PC-9 (cell line): ENCODE measurements at regions of chr4 and their contacts with region 1.

Region 1: GRCh38 chr4:112031712-112032328 is 113.4 kb upstream of the FAM241A start:
- DNase-seq: peak; percentile 20 to 46
- H3K4me3 ChIP-seq: no peak overlapping the region
- H3K27ac ChIP-seq: no peak overlapping the region
- H3K4me1 ChIP-seq: no peaks in the 10 kb centered on the region
- H3K27me3 ChIP-seq: no peaks in the 10 kb centered on the region
- CTCF ChIP-seq: peak; percentile 88

Region 2: DNA sequence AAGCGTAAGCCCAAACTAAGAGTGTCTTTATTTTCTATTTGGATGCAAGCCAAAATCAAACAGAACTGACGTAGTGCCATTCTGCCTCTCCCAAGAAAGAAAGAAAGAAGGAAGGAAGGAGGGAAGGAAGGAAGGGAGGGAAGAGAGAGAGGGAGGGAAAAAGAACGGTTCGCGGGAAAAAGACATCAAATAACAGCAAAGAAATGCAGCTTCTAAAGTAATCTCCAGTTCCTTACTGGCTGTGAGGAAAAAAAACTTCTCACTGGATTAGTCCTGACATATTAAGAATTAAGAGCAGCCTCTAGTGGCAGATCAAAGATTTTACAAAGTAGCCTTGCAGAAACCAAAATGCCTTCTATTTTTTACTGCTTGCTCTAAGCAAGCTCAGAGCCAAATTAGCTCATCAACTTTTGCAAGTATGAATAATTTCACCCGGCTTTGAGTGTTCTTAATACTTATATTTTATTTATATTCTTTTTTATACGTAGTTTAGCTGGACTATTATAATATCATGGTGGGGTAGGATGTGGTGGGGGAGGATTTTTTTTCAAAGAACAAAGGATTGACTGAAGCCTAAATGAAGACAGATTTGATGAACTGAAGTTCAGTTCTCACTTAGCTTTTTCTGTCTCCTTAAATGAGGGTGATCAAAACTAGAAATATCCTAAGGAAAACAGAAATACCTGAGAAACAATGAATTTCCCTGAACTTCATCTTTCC is 1445.5 kb before region 1 on chr4:
- CTCF ChIA-PET with region 1: no interaction called
- POLR2A ChIA-PET with region 1: no interaction called
- intact Hi-C with region 1: loop called (anchors 2 kb)
- DNase-seq: peak in 1 of 2 experiments; percentile 42
- H3K4me3 ChIP-seq: no peak overlapping the region
- H3K27ac ChIP-seq: no peak overlapping the region
- H3K4me1 ChIP-seq: no peaks in the 10 kb centered on the region
- H3K27me3 ChIP-seq: no peaks in the 10 kb centered on the region
- CTCF ChIP-seq: peak; percentile 55

Region 3: GRCh38 chr4:111546881-111547280 is 484.9 kb before region 1 on chr4:
- CTCF ChIA-PET with region 1: no interaction called
- POLR2A ChIA-PET with region 1: interaction called, 11 read pairs
- intact Hi-C with region 1: no loop called
- DNase-seq: no peak
- H3K4me3 ChIP-seq: no peak overlapping the region
- H3K27ac ChIP-seq: no peak overlapping the region
- H3K4me1 ChIP-seq: no peaks in the 10 kb centered on the region
- H3K27me3 ChIP-seq: no peaks in the 10 kb centered on the region
- CTCF ChIP-seq: no peak

Region 4: GRCh38 chr4:111788099-111788498 is 243.7 kb before region 1 on chr4:
- CTCF ChIA-PET with region 1: no interaction called
- POLR2A ChIA-PET with region 1: no interaction called
- intact Hi-C with region 1: no loop called
- DNase-seq: no peak
- H3K4me3 ChIP-seq: no peak overlapping the region
- H3K27ac ChIP-seq: no peak overlapping the region
- H3K4me1 ChIP-seq: no peaks in the 10 kb centered on the region
- H3K27me3 ChIP-seq: no peaks in the 10 kb centered on the region
- CTCF ChIP-seq: no peak

Region 5: GRCh38 chr4:111854494-111855087 is 177.2 kb before region 1 on chr4:
- CTCF ChIA-PET with region 1: interaction called, 7 read pairs
- POLR2A ChIA-PET with region 1: no interaction called
- intact Hi-C with region 1: loop called (anchors 2 kb)
- DNase-seq: peak; percentile 2 to 39
- H3K4me3 ChIP-seq: no peak overlapping the region
- H3K27ac ChIP-seq: no peak overlapping the region
- H3K4me1 ChIP-seq: no peaks in the 10 kb centered on the region
- H3K27me3 ChIP-seq: no peaks in the 10 kb centered on the region
- CTCF ChIP-seq: peak; percentile 87

Region 6: GRCh38 chr4:112817933-112818593 is 786.2 kb after region 1 on chr4:
- CTCF ChIA-PET with region 1: no interaction called
- POLR2A ChIA-PET with region 1: no interaction called
- intact Hi-C with region 1: no loop called
- DNase-seq: peak in 1 of 2 experiments; percentile 18
- H3K4me3 ChIP-seq: peak overlapping the region; percentile 41; the same call in 1 of the 2 replicates
- H3K27ac ChIP-seq: no peak overlapping the region
- H3K4me1 ChIP-seq: no peaks in the 10 kb centered on the region
- H3K27me3 ChIP-seq: no peaks in the 10 kb centered on the region
- CTCF ChIP-seq: no peak

Region 7: DNA sequence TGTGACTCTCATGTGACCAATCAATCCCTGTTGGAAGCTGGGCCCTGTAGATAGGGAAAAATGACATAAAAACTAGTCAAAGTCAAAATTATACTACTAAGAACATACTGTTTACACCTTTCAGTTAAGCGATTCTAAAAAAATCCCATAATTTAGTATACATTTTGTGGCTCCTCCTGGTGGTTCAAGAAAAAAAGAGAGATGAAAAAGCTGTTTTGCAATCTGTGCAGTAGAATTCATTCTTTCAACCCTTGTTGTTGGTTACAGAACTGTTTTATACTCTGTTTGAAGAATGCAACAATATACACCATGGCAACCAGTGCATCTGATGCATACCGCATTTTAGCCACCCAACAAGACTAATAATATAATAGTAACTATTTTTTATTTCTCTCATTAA is 950.9 kb after region 1 on chr4:
- CTCF ChIA-PET with region 1: no interaction called
- POLR2A ChIA-PET with region 1: no interaction called
- intact Hi-C with region 1: no loop called
- DNase-seq: no peak
- H3K4me3 ChIP-seq: no peak overlapping the region
- H3K27ac ChIP-seq: no peak overlapping the region
- H3K4me1 ChIP-seq: no peaks in the 10 kb centered on the region
- H3K27me3 ChIP-seq: no peaks in the 10 kb centered on the region
- CTCF ChIP-seq: no peak